ENCODE measurements at regions of chr17 and their contacts with region 1.

Region 1: DNA sequence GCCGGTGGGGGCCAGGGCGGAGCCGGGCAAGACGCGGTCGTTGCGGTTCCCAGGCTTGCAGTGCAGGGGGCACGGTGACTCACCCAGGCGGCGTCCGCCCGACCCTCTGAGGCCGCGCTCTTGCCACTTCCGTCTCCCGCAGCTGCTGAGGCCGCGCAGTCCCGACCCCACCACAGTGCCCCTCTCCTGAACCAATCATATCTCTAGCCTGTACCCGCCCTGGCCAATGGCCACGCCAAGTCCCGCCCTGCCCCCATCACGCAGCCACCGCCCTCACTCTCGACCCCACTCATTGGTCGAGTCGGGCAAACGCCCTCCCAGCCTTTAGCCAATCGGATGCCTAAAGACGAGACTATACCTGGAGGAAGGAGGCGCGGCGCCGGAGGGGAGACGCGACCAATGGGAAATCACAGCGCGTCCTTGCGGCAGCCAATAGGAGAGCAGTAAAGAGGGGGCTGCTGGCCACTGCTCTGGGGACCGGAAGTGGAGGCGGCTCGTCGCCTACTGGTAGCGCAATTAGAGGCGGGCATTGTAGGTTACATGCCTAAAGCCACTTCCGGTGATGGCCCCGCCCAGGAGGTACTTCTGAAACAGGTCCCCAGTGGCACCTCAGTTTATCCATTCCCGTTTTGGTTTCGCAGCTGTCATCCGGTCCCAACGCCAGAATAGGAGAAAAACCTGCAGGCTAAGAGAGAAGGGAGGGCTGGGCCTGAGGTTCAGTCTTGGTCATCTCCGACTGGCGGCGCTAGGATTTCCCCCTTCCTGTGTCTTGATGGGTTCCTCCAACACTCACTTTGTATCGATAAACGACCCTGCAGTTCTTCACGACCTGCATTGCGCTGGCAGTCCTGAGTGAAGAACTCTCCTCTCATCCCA is 3.5 kb upstream of the MTMR4 start:
- DNase-seq: peak; percentile 100
- H3K4me3 Mint-ChIP-seq: peak overlapping the region; percentile 86
- H3K27ac Mint-ChIP-seq: peak overlapping the region; percentile 91
- H3K4me1 Mint-ChIP-seq: peaks cover 32% of the 10 kb centered on the region
- H3K27me3 Mint-ChIP-seq: no peaks in the 10 kb centered on the region

Region 2: DNA sequence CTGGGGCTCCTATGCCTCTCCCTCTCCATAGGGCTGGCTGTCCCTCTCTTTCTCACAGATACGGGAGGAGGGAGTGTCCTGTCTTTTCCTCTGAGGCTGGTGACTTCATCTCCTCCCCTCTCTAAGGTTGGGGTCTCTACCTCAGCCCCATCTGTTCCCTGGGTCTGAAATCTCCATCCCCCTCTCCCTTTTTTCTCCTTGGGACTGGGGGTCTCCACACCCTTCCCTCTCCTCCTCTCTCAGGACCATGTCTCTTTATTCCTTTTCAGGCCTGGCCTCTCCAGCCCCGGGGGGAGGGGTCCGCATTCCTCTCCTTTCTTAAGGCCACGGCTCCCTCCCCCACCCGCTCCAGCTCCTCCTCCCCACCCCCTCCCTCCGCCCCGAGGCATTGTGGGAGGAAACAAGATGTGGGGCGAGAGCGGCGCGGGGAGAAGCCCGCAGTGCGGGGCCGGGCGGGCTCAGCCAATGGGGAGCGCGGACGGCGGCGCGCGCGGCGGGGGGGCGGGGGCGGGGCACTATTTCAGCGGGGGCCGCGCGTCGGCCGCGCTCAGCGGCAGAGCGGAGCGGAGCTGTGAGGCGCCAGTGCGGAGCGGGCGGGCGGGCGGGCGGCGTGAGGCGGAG is 435.0 kb before region 1 on chr17 and contains the start of gene DYNLL2:
- intact Hi-C with region 1: loop called (anchors 1 kb)
- DNase-seq: peak; percentile 84
- H3K4me3 Mint-ChIP-seq: peak within 1 kb of the TSS; percentile 90
- H3K27ac Mint-ChIP-seq: peak within 1 kb of the TSS; percentile 78
- H3K4me1 Mint-ChIP-seq: peaks cover 32% of the 10 kb centered on the region
- H3K27me3 Mint-ChIP-seq: peaks cover 25% of the 10 kb centered on the region
- total RNA-seq, gene DYNLL2: 35.8 and 37.6 TPM in 2 replicates

Region 3: DNA sequence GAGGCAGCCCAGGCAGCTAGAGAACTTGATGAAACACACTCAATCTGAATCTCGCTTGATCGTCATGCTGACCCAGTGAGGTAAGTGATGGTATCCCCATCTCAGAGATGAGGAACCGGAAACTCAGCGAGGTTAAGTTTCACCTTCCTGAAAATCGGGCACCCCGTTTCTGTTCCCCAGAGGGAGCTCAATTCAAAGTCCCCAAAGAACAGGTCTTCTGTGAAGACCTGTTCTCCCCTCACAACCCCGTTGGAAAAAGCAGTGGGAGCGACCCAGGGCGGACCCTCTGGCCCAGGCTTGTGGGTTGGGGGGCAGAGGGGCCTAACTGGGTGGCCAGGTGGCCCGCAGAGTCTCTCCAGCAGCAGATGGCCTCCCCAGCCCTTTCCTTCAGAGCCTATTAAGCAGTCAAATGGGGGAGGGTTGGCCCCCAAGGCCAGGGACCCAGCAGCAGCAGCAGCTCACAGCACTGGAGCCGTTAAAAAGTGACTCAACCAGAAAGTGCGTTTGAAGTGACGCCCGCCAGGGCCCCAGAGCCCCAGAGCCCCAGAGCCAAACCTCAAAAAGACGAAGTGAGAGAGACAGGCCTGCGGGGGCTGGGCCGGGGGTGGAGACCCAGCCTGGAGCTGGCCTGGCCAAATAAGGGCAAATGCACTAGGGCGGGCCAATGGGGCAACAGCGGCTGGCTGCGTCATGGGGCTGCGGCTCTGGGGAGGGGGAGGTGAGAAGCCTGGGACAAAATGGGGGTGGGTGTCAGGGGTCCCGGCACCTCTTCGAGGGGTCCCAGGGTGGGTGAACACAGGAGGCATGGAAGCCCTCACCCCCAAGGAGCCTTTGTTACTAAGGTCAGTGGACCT is 180.1 kb before region 1 on chr17:
- intact Hi-C with region 1: loop called (anchors 2 kb)
- DNase-seq: peak; percentile 92
- H3K4me3 Mint-ChIP-seq: peak overlapping the region; percentile 100
- H3K27ac Mint-ChIP-seq: peak overlapping the region; percentile 99
- H3K4me1 Mint-ChIP-seq: peaks cover 61% of the 10 kb centered on the region
- H3K27me3 Mint-ChIP-seq: peaks cover 2% of the 10 kb centered on the region

Region 4: GRCh38 chr17:58587702-58588254 is 69.8 kb after region 1 on chr17:
- intact Hi-C with region 1: loop called (anchors 2 kb)
- DNase-seq: peak; percentile 15
- H3K4me3 Mint-ChIP-seq: no peak overlapping the region
- H3K27ac Mint-ChIP-seq: no peak overlapping the region
- H3K4me1 Mint-ChIP-seq: no peaks in the 10 kb centered on the region
- H3K27me3 Mint-ChIP-seq: peaks cover 2% of the 10 kb centered on the region

Region 5: DNA sequence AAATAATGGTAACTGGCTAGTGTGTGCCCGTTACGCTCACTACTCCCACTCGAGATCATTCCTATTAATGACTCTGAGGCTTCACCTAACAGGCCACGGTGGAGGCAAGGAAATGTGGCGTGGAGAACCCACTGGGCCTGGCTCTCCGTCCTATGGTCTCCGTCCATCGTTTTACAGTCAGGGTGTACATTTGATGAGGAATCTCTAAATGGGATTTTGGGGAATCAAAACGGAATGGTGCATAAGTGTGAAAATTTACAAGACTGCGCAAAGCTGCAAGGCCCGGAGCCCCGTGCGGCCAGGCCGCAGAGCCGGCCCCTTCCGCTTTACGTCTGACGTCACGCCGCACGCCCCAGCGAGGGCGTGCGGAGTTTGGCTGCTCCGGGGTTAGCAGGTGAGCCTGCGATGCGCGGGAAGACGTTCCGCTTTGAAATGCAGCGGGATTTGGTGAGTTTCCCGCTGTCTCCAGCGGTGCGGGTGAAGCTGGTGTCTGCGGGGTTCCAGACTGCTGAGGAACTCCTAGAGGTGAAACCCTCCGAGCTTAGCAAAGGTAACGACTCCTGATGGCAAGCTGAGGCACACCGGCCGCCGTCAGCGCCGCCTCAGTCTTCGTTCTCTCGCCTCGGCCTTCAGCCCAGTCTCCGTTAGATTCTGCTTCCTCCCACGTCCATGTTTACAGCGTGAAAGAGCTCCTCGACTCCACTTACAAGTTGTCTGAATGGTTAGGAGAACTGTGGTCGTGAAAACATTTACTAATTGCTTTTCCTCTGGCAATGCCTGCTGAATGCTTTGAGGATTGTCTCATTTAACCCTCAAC is 174.5 kb after region 1 on chr17 and contains the start of gene RAD51C:
- intact Hi-C with region 1: loop called (anchors 1 kb)
- DNase-seq: peak; percentile 86
- H3K4me3 Mint-ChIP-seq: peak within 1 kb of the TSS; percentile 97
- H3K27ac Mint-ChIP-seq: peak within 1 kb of the TSS; percentile 98
- H3K4me1 Mint-ChIP-seq: peaks cover 31% of the 10 kb centered on the region
- H3K27me3 Mint-ChIP-seq: no peaks in the 10 kb centered on the region
- total RNA-seq, gene RAD51C: 86.3 and 91.2 TPM in 2 replicates

Region 6: DNA sequence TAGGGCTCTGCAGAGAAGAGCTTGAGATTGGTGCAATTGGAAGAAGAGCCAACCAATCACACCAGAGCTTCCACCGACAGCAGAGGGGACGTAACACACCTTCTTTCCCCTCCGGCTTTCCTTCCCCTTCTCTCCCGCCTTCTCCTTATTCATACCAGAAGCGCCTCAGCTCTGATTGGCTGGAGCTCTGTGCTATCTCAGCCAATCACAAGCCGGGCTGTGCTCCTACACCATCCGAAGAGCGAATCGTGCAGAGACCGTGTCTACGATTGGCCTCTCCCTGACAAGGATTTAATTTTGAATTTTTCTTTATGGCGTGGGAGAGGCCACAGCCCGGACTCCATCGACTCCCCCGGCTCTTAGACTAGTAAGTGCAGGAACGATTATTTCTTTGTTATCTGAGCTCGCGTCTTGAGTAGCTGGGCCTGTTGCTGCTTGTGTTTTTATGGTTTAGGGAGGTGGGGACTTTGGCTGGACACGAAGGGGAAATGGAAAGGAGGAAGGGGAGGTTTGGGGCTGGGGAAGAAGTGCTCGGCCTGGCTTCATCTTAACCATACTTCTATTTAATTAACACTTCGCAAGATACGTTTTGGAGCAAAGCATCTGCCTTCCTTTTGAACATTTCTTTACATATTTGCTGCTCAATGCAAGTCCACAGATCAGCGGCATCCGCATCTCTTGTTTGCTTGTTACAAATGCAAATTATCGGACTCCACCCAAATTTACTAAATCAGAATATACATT is 637.6 kb after region 1 on chr17 and contains the start of gene PRR11:
- intact Hi-C with region 1: loop called (anchors 1 kb)
- DNase-seq: peak; percentile 94
- H3K4me3 Mint-ChIP-seq: no peak within 1 kb of the TSS
- H3K27ac Mint-ChIP-seq: no peak within 1 kb of the TSS
- H3K4me1 Mint-ChIP-seq: peaks cover 63% of the 10 kb centered on the region
- H3K27me3 Mint-ChIP-seq: no peaks in the 10 kb centered on the region
- total RNA-seq, gene PRR11: 29.4 and 32.7 TPM in 2 replicates